ENCODE measurements at regions of chr3 and their contacts with region 1.

Region 1: DNA sequence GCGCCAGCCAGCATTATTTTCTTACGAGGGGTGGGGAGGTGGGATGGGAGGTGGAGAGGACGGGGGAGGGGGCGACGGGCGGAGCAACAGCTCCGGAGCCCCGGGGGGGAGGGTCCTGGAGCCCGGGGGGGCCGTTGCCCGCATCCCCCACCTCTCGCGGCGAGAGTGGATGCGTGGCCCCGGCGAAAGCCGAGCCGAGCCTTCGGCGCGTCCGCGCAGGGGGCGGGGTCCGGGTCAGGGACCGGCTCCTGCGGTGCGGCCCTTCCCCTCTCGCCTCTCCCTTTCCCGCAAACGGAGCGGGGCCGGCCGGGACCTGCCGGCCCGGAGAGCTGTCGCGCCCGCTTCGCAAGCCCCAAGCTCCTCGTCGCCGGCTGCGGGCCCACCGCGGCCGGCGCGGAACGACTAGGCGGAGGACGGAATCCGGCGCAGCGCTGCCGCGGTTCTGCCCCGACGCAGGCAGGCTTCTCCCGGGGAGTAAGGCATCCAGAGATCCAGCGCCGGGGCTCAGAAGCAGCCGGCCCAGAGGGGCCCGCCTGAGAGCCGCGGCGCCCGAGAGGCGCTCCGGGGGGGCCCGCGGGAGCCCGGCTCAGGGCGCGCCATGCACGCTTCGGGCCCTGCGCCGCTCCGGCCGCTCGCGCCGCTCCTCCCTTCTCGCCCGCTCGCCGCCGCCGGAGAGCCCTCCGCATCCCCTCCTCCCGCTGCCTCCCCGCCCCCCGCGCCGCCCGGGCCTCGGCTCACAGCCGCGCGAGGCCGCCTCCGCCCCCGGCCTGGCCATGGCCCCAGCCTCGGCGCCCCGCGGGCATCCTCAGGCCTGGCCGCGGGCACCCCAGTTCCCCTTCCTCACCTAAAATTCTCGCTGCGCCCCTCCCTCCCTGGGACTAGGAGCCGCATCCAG is 459 bp upstream of the ADCY5 start:
- DNase-seq: no peak
- H3K4me3 Mint-ChIP-seq: peak overlapping the region; percentile 29
- H3K27ac Mint-ChIP-seq: no peak overlapping the region
- H3K4me1 Mint-ChIP-seq: peaks cover 2% of the 10 kb centered on the region
- H3K27me3 Mint-ChIP-seq: peaks cover 41% of the 10 kb centered on the region

Region 2: GRCh38 chr3:123469323-123469995 is 20.1 kb after region 1 on chr3:
- CTCF ChIA-PET with region 1: no interaction called
- POLR2A ChIA-PET with region 1: no interaction called
- intact Hi-C with region 1: no loop called
- DNase-seq: no peak
- H3K4me3 Mint-ChIP-seq: no peak overlapping the region
- H3K27ac Mint-ChIP-seq: no peak overlapping the region
- H3K4me1 Mint-ChIP-seq: no peaks in the 10 kb centered on the region
- H3K27me3 Mint-ChIP-seq: peaks cover 6% of the 10 kb centered on the region

Region 3: DNA sequence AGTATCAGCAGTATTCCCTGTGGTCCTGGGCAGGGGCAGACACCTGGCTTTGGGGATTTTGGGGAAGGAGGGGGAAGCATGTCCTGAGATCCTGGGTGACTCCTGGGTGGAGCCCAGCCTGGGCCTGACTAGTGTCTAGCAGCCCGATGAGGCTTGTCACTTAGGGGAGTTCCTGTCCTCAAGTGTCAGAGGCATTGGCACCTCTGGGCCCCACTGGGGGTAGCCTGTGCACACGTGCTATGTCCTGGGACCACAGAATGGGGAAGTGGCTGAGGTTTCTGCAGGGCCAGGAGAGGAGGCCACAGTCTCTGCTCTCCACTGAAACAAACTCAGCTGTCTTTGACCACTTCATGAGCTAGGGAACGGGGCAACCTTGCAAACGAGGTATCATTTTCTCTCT is 31.1 kb after region 1 on chr3:
- CTCF ChIA-PET with region 1: no interaction called
- POLR2A ChIA-PET with region 1: no interaction called
- intact Hi-C with region 1: loop called (anchors 5 kb)
- DNase-seq: no peak
- H3K4me3 Mint-ChIP-seq: no peak overlapping the region
- H3K27ac Mint-ChIP-seq: no peak overlapping the region
- H3K4me1 Mint-ChIP-seq: no peaks in the 10 kb centered on the region
- H3K27me3 Mint-ChIP-seq: peaks cover 7% of the 10 kb centered on the region